ENCODE measurements at regions of chr3 and their contacts with region 1.

Region 1: DNA sequence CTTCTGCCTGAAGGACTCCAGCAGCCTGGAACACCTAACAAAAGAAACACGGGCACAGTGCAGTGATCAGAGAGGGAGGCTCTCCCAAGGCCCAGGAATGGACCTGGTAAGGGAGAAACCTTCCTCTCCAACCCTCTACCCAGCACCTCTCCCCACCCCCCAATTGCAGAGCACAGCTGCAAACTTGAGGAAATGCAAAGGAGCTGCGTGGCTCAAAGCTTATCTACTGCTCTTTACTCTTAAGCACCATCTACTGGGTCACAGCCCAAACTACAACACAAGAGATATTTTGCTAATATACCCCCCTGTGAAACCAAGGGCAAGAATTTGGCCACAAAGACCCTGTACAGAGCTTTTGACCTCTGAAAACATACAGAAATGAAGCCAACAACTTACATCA is 328.3 kb downstream of the OXSM start:
- DNase-seq: no peak
- ATAC-seq: no peak

Region 2: DNA sequence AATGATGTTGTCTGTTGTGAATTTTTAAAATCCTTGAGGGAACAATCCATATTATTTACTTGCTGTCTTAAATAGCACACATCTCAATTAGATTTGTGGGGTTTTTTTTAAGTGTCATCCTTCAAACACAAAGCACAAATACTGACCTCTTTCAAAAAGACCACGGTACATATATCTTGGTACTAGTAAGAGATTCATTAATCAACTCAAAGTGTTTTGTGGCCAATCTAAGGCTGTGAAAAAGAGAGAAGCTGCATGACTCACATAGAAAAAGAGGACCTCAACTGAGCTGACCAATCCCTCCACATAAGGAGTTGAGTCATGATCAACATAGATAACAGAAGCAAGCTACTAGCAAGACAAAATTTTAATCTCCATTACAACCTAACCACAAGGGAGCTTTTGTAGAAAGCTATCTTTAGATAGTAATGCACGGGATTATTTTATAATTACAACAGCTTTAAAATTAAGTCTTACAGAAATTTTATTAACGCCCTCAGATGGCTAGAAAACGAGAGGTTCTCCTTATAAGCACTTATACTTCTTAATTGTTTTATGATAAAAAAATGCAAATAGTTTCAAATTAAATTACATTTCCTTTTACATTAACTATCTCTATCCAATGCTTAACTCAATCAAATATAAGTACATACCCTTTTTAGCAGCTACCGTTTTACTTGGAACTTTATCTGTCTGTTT is 513.9 kb before region 1 on chr3:
- intact Hi-C with region 1: no loop called
- DNase-seq: no peak
- ATAC-seq: peak; percentile 56 to 95

Region 3: GRCh38 chr3:25904206-25904605 is 214.0 kb before region 1 on chr3:
- intact Hi-C with region 1: loop called (anchors 2 to 10 kb)
- DNase-seq: no peak
- ATAC-seq: peak; percentile 55 to 56